Right lobe of liver (tissue), 6 donors: ENCODE measurements at regions of chr17 and their contacts with region 1.

Region 1: GRCh38 chr17:17526369-17526768 is 30.2 kb upstream of the RASD1 start:
- DNase-seq: peak in 2 of 3 donors; percentile 57 to 65
- ATAC-seq: peak; percentile 10 to 24 (median 12)
- H3K4me3 ChIP-seq: no peak overlapping the region
- H3K27ac ChIP-seq: peak overlapping the region in 2 of 3 donors; percentile 74 to 97
- H3K4me1 ChIP-seq: peaks cover 0 to 69% (median 25%) of the 10 kb centered on the region in 4 donors
- H3K27me3 ChIP-seq: no peaks in the 10 kb centered on the region
- CTCF ChIP-seq: no peak
- POLR2A ChIP-seq: no peak

Region 2: GRCh38 chr17:17476865-17477467 is 49.4 kb before region 1 on chr17 and contains the start of gene MED9:
- intact Hi-C with region 1: no loop called
- DNase-seq: peak; percentile 94
- ATAC-seq: peak; percentile 96 to 100 (median 99)
- H3K4me3 ChIP-seq: peak within 1 kb of the TSS; percentile 69 to 97 (median 92)
- H3K27ac ChIP-seq: peak within 1 kb of the TSS; percentile 79 to 87 (median 80)
- H3K4me1 ChIP-seq: peaks cover 0 to 15% (median 6%) of the 10 kb centered on the region in 4 donors
- H3K27me3 ChIP-seq: no peaks in the 10 kb centered on the region
- CTCF ChIP-seq: no peak
- POLR2A ChIP-seq: peak; percentile 89
- total RNA-seq, gene MED9: 5.7 to 24.4 (median 12.4) TPM

Region 3: DNA sequence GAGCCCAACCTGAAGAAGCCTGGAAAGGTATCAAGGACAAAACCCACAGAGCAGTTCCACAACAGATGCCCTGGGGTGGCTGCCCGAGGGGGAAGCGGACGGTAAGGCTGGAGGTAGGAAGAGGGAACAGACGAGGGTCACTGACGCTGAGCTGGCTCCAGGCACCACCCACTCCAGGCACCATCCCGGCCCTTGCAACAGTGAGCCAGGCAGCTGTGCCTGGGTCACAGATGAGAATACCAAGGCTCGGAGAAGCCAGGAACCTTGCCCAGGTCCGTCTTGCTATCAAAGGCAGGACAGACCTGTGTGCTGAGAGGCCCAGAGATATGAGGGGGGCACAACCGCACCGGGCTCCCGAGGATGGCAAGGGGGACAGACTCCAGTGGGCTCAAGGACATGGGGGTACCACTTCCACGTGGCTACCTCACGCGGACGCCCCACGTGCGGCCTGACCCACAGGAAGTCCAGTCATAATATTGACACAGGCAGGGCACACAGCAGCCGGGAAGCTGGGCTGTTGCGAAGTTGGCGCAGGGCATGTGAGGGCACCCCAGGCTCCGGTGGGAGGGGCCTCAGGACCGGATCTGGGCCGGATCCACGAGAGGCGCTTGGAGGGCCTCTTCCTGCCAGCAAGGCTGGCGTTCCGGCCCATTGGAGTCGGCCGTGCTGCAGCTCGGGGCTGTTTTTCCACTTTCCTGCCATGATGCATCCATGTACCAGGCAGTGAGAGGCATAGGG is 35.2 kb after region 1 on chr17:
- intact Hi-C with region 1: loop called in 1 of 2 experiments (anchors 5 kb)
- DNase-seq: peak; percentile 92 to 96 (median 96)
- ATAC-seq: peak; percentile 73 to 87 (median 79)
- H3K4me3 ChIP-seq: peak overlapping the region in 1 of 3 donors; percentile 14
- H3K27ac ChIP-seq: peak overlapping the region; percentile 84 to 94 (median 87)
- H3K4me1 ChIP-seq: peaks cover 0 to 76% (median 36%) of the 10 kb centered on the region in 4 donors
- H3K27me3 ChIP-seq: no peaks in the 10 kb centered on the region
- CTCF ChIP-seq: no peak
- POLR2A ChIP-seq: peak; percentile 80